ENCODE measurements at regions of chr1 and their contacts with region 1.

Region 1: DNA sequence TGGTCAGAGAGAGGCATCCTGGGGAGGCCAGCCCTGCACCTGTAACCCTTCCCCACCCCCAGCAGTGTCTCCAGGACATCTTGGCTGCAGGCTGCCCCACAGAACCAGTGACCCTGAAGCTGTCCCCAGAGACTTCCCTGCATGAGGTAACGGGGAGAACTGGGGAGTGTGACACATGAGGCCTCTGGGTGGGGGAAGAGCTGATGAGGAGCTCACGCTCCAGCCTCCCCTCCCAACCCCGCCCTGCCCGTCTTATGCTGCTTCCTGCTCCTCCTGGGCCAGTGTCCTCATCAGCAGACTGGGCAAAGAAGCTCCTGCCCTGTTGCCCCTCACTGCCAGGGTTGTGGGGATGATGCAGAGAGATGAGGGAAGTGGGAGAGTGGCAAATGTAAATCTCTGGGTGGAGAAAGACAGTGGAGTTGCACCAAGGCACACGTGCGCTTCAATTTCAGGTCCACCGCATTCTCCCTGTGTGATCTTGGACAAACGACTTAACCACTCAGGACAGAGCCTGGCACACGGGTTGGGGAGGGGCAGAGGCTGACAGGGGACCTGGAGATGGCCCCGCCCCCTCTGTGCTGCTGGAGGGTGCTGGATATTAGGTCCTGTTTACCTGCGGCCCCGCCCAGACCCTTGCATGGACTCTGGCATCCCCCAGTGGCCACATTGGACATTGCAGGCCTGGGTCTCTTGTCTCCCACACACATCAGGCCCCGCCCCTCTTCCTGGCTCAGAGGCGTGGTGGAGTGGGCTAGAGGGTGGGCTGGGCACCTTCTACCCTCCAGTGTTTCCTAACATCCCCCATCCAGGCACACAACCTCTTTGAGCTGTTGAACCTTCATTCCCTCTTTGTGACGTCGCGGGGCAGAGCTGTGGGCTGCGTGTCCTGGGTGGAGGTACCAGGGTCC is 12.3 kb downstream of the CLCNKB start:
- DNase-seq: peak; percentile 99
- ATAC-seq: peak; percentile 97
- H3K4me3 Mint-ChIP-seq: peak overlapping the region; percentile 24; the same call in 1 of the 2 replicates
- H3K27ac Mint-ChIP-seq: no peak overlapping the region
- H3K4me1 Mint-ChIP-seq: peaks cover 7% of the 10 kb centered on the region
- H3K27me3 Mint-ChIP-seq: no peaks in the 10 kb centered on the region; the same call in 1 of the 2 replicates
- CTCF ChIP-seq: peak; percentile 96

Region 2: DNA sequence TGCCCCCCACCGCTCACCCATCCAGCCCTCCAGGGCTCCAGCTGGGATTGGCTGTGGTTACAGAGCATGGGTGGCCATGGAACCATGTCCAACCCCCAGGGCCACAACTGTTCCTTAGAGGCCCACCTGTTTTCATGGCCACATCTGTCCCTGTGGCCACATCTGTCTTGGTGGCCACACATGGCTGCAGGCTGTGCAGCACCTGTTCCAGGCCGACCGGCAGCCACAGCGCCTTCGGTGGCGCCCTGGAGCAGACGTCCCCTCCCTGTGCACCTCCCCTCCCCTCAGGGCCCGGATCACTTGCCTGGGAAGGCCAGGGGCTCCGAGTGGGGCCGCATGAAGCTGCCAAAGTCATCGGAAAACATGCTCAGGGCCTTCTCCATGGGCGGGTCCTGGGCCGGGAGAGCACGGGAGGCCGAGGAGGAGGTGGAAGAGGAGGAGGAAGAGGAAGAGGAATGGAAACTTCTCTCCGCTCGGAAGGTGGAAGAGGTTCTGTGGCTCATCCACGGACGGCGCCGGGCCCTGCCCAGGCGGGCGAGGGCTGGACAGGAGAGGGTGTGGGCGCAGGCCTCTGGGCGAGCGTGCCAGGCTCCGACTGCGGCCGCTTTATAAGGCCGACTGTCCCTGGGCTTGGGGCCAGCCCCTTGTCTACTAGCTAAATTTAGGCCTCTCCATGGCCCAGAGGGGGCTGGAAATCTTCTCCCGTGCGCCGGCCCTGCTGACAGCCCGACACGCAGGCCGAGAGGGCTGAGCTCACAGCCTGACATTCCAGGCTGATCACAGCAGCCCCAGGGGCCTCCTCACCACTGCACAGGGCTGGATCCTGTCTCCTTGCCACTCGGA is 38.2 kb before region 1 on chr1 and contains the start of gene HSPB7:
- CTCF ChIA-PET with region 1: interaction called, 11 read pairs
- POLR2A ChIA-PET with region 1: no interaction called
- DNase-seq: peak; percentile 71
- ATAC-seq: peak; percentile 28
- H3K4me3 Mint-ChIP-seq: no peak within 1 kb of the TSS
- H3K27ac Mint-ChIP-seq: no peak within 1 kb of the TSS
- H3K4me1 Mint-ChIP-seq: peaks cover 62% of the 10 kb centered on the region
- H3K27me3 Mint-ChIP-seq: peaks cover 27% of the 10 kb centered on the region
- CTCF ChIP-seq: no peak
- total RNA-seq, gene HSPB7: 0.11 to 0.23 TPM (median 0.21 TPM) in 3 replicates

Region 3: GRCh38 chr1:16032388-16033103 is 23.3 kb before region 1 on chr1:
- CTCF ChIA-PET with region 1: interaction called, 13 read pairs
- POLR2A ChIA-PET with region 1: no interaction called
- DNase-seq: peak; percentile 98
- ATAC-seq: peak; percentile 98
- H3K4me3 Mint-ChIP-seq: no peak overlapping the region
- H3K27ac Mint-ChIP-seq: no peak overlapping the region
- H3K4me1 Mint-ChIP-seq: peaks cover 19% of the 10 kb centered on the region
- H3K27me3 Mint-ChIP-seq: peaks cover 7% of the 10 kb centered on the region; the same call in 1 of the 2 replicates
- CTCF ChIP-seq: peak; percentile 97

Region 4: DNA sequence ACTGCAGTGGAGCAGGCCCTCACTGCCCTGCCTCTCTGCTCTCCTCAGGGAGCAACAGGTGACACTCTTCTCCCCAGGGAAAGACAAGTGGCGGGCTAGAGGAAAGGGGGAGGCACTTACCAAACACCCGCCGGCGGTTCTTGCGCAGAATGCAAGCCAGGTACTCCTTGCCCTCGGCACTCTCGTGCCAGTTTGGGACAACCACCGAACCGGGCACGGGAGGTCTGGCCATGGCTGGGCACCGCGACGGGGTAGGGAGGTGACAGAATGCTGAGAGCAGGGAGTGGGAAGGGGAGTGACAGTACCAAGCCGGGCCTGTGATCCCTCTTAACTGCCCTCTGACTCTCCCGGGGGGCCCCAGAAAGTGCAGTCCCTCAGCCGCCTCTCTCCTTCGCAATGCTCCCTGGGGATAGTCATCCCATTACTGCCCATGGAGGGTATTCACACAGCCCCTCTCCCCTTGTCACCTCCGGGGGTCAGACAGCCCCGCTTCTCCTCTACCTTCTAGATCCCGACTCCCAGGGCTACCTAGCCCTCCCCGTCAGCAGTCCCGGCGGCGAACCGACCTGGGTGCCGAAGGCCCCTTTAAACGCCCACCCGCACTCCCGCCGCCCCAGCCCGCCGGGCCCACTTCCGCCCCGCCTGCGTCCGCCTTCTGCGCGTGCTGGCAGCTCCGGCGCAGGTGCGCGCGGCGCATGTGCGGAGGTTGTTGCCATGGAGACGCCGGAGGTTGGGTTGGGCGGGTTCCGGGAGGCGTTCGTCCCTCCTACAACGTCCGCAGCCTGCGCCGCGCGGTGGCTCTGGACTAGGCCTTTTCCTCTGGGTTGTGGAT is 180.9 kb after region 1 on chr1 and contains the start of gene CPLANE2:
- CTCF ChIA-PET with region 1: no interaction called
- POLR2A ChIA-PET with region 1: no interaction called
- DNase-seq: peak; percentile 97
- ATAC-seq: peak; percentile 88
- H3K4me3 Mint-ChIP-seq: peak within 1 kb of the TSS; percentile 80
- H3K27ac Mint-ChIP-seq: 0 out of 2 replicates have a peak within 1 kb of the TSS, but pooled peaks have one; percentile 68
- H3K4me1 Mint-ChIP-seq: peaks cover 15% of the 10 kb centered on the region
- H3K27me3 Mint-ChIP-seq: no peaks in the 10 kb centered on the region; the same call in 1 of the 2 replicates
- CTCF ChIP-seq: no peak
- total RNA-seq, gene CPLANE2: 3.9 to 5.0 TPM (median 4.9 TPM) in 3 replicates

Measured in WTC11 (cell line).